Vagina (tissue), 2 donors: ENCODE measurements at regions of chr7 and their contacts with region 1.

Region 1: GRCh38 chr7:128739048-128739962 is at the start of gene CALU:
- DNase-seq: peak in 1 of 2 donors; percentile 98
- H3K4me3 ChIP-seq: peak within 1 kb of the TSS; percentile 92 to 97
- H3K27ac ChIP-seq: peak within 1 kb of the TSS; percentile 88
- H3K4me1 ChIP-seq: peaks cover 56% of the 10 kb centered on the region
- H3K27me3 ChIP-seq: no peaks in the 10 kb centered on the region
- CTCF ChIP-seq: no peak
- POLR2A ChIP-seq: peak in 1 of 2 donors; percentile 86
- total RNA-seq, gene CALU: 65.3 TPM

Region 2: DNA sequence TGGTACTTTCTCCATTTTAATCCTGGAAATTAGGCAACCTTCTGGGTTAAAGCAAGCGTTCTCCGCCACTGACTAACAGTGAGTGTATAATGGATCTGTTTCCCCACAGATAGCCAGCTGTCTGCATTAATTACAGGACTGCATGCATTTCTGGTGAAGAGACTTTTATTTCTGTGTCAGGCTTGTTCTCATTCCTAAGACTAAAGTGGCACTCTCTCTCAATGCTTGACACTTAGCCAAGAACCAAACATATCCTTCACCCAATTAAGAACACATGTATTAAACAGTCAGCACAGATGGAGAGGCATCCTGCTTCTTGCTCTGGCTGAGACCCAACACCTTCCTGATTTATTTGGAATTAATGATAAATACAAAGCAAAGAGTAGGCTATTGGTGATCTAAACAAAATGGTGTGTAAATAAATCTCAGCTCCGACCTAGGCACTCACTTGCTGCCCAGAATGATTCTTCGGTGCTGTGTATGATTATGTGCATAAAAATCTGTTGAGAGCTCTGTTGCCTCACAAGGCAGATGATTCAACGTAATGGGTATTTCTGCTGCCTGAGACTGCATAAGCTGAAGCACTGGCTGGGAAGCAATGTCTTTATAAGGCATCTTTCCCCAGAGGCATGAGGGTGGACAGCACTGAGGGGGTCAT is 16.6 kb after region 1 on chr7:
- intact Hi-C with region 1: loop called (anchors 2 kb)
- DNase-seq: no peak
- H3K4me3 ChIP-seq: no peak overlapping the region
- H3K27ac ChIP-seq: peak overlapping the region; percentile 76
- H3K4me1 ChIP-seq: peaks cover 20% of the 10 kb centered on the region
- H3K27me3 ChIP-seq: no peaks in the 10 kb centered on the region
- CTCF ChIP-seq: no peak
- POLR2A ChIP-seq: no peak

Region 3: GRCh38 chr7:128862571-128863432 is 123.5 kb after region 1 on chr7 and contains the start of gene ATP6V1F:
- intact Hi-C with region 1: loop called (anchors 10 kb)
- DNase-seq: peak; percentile 96 to 99
- H3K4me3 ChIP-seq: peak within 1 kb of the TSS; percentile 60 to 95
- H3K27ac ChIP-seq: peak within 1 kb of the TSS; percentile 90
- H3K4me1 ChIP-seq: peaks cover 66% of the 10 kb centered on the region
- H3K27me3 ChIP-seq: no peaks in the 10 kb centered on the region
- CTCF ChIP-seq: peak; percentile 1 to 10 (median 9)
- POLR2A ChIP-seq: peak in 1 of 2 donors; percentile 87
- total RNA-seq, gene ATP6V1F: 119 TPM